HAP-1 (cell line): ENCODE measurements at regions of chr6 and their contacts with region 1.

Region 1: DNA sequence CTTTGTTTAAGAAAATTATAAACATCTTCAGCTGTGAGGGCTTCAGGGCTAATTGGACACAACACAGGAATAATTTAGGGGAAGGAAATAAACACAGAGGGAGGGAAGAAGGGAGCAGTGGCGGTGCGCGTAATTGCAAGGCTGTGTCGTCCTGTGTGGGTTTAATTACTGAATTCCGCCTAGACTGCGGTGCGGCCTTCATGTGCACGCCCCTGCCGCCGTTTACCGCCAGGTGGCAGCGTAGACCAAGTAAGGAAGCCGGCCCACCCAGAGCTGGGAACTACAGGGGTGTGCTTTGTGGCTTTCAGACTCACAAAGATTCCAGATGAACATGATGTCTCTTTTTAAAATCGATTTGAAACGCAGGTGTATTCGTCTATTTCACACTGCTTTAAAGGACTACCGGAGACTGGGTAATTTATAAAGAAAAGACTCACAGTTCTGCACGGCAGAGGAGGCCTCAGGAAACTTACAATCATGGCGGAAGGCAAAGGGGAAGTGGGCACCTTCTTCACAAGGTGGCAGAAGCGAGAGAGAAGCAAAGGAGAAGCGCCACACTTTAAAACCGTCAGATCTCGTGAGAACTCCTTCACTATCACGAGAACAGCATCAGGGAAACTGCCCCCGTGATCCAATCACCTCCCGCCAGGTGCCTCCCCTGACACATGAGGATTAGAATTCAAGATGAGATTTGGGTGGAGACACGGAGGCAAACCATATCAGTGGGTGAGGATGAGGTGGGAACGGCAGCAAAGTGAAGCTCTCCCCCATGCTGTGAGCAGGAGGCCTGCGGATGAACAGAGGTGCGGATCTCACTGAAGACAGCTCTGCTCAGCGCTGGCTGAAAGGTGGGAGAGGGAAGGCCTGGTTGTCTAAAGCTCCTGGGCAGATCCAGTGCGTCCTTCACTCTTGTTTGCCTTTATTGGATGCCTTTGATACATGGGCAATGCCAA is 222.0 kb upstream of the PDE10A start:
- DNase-seq: peak; percentile 76 to 91
- H3K4me3 ChIP-seq: no peak overlapping the region
- H3K4me1 ChIP-seq: no peaks in the 10 kb centered on the region
- H3K27me3 ChIP-seq: no peaks in the 10 kb centered on the region

Region 2: GRCh38 chr6:165676435-165677068 is 208.5 kb before region 1 on chr6:
- in situ Hi-C with region 1: no loop called
- DNase-seq: no peak
- H3K4me3 ChIP-seq: no peak overlapping the region
- H3K4me1 ChIP-seq: peaks cover 5% of the 10 kb centered on the region
- H3K27me3 ChIP-seq: no peaks in the 10 kb centered on the region

Region 3: DNA sequence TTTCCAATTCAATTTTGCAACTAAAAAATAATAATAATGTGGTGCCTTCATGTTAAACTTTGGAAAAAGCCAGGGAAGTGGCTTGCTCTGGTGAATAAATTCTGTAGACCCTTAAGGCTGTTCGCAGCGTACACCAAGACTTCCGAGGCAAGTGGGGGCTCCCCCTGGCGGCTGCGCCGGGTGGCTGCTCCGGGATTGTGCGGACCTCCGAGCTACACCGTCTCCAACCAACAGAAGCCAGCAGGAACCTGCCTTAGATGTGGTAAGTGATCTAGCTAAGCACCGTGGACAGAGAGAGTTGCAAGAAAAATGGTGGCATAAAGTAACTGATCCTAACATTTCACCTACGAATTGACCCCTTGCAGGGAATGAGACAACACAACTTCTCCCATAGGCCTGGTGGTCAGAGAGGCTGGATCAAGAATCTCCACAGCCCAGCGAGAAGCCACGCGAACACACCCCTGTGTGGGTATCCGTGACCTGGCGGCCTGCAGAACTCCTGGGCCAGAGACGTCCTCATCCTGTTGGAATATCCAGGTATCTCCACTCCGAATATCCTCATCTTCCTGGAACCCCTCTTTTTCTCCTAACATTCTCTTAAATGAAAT is 212.9 kb after region 1 on chr6:
- in situ Hi-C with region 1: loop called (anchors 5 kb)
- DNase-seq: peak; percentile 48 to 83
- H3K4me3 ChIP-seq: no peak overlapping the region
- H3K4me1 ChIP-seq: no peaks in the 10 kb centered on the region
- H3K27me3 ChIP-seq: no peaks in the 10 kb centered on the region

Region 4: DNA sequence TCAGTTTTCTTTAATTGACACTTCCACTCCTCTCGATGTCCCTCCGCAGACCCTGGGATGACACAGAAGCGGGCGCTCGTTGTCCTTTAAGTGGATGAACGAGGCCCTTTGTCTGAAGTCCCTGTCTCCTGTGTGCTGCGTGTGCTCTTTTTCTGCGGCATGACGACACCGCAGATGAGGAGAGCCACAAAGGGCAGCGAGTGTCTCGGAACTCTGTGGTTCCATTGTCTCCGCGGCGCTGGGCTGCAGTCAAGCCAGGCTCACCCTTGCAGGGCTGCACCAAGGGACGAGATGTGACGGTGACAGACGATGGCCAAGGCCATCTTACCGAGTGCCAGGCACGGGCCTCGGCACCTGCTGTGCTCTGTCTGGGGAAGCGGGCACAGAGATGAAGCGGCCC is 412.5 kb after region 1 on chr6:
- in situ Hi-C with region 1: no loop called
- DNase-seq: no peak
- H3K4me3 ChIP-seq: no peak overlapping the region
- H3K4me1 ChIP-seq: no peaks in the 10 kb centered on the region
- H3K27me3 ChIP-seq: 0 out of 2 replicates have a peak, but pooled peaks cover 4% of the 10 kb centered on the region